GM12878 (cell line): ENCODE measurements at regions of chr10 and their contacts with region 1.

Region 1: GRCh38 chr10:84205049-84205852 is 10.9 kb downstream of the CDHR1 start:
- DNase-seq: peak; percentile 27
- ATAC-seq: peak; percentile 84
- H3K4me3 ChIP-seq: no peak overlapping the region
- H3K27ac ChIP-seq: no peak overlapping the region
- H3K4me1 ChIP-seq: no peaks in the 10 kb centered on the region
- H3K27me3 ChIP-seq: peaks cover 0 to 7% of the 10 kb centered on the region in 2 experiments
- CTCF ChIP-seq: peak; percentile 96 to 99 (median 98); a peak in 5 of 6 replicates
- EP300 ChIP-seq: no peak
- POLR2A ChIP-seq: no peak
- RAD21 ChIP-seq: peak; percentile 94

Region 2: GRCh38 chr10:83886871-83887270 is 318.4 kb before region 1 on chr10:
- CTCF ChIA-PET with region 1: no interaction called
- POLR2A ChIA-PET with region 1: no interaction called
- RAD21 ChIA-PET with region 1: no interaction called
- SMC1A ChIA-PET with region 1: no interaction called
- in situ Hi-C with region 1: no loop called
- intact Hi-C with region 1: loop called (anchors 5 kb)
- DNase-seq: no peak
- ATAC-seq: no peak
- H3K4me3 ChIP-seq: no peak overlapping the region
- H3K27ac ChIP-seq: no peak overlapping the region
- H3K4me1 ChIP-seq: no peaks in the 10 kb centered on the region
- H3K27me3 ChIP-seq: no peaks in the 10 kb centered on the region
- CTCF ChIP-seq: no peak
- EP300 ChIP-seq: no peak
- POLR2A ChIP-seq: no peak
- RAD21 ChIP-seq: no peak

Region 3: DNA sequence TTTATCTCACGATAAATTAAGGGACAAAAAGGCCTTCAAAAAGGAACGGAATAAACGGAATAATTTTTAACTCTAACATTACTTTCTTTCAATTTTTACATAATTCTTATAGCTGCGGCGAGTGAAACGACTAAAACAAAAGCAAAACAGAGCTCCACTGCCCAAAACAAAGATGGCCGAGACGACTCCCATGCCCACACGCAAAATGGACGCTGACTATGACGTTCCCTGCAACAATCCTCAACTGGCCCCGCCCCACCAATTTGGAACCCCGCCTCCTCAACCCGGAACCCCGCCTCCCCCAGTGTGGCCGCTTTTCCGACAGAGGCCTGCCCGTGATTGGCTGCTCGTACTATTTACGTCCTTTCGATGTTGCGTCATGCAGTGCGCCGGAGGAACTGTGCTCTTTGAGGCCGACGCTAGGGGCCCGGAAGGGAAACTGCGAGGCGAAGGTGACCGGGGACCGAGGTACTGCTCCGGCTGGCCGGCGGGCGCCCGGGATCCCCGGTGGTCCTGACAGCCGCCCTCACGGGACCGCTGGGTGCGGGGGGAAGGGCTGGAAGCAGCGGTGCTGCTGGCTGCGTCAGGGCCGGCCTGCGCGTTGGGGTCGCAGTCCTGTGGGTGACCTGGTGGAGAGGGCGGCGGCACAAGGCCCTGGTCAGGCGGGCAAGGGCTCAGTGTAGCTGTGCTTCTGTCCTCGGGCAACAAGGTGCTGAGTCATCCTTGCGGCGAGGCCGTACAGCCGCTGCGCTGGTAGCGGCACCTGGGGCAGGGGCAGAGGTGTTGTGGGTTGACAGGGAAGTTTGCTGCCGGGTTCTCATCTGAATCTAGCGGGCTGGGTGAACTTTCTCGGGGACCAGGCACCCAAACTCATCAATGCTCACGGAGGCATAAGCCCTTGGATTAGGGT is 65.9 kb before region 1 on chr10 and contains the start of gene GHITM:
- CTCF ChIA-PET with region 1: interaction called, 39 read pairs
- POLR2A ChIA-PET with region 1: no interaction called
- RAD21 ChIA-PET with region 1: interaction called, 8 read pairs
- SMC1A ChIA-PET with region 1: interaction called, 5 read pairs
- in situ Hi-C with region 1: loop called (anchors 10 kb)
- intact Hi-C with region 1: no loop called
- DNase-seq: peak; percentile 92
- ATAC-seq: peak; percentile 98
- H3K4me3 ChIP-seq: peak within 1 kb of the TSS; percentile 84
- H3K27ac ChIP-seq: peak within 1 kb of the TSS; percentile 88
- H3K4me1 ChIP-seq: no peaks in the 10 kb centered on the region
- H3K27me3 ChIP-seq: no peaks in the 10 kb centered on the region
- CTCF ChIP-seq: peak; percentile 21 to 39 (median 29); a peak in 4 of 6 replicates
- EP300 ChIP-seq: peak; percentile 19 to 34; a peak in 1 of 4 replicates
- POLR2A ChIP-seq: peak; percentile 93
- RAD21 ChIP-seq: no peak
- polyA plus RNA-seq, gene GHITM: 366 to 501 TPM

Region 4: DNA sequence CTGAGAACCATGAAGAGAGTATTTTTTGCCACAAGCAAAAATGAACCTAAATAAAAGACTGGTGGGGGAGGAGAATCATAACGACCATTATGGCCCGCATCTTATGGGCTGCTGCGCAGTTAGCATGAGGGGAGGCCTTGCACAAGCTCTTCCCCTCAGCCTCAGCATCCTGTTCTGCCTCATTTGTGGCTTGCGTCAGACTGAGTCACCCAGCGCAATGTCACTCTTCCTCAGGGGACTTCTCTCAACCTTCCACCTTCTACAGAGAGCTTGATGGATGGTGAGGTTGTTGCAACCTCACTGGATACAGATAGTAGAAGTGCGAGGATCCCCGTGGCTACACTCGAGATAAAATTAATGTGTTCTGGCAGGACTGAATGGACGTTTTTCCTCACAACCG is 48.5 kb before region 1 on chr10:
- CTCF ChIA-PET with region 1: interaction called, 788 read pairs
- POLR2A ChIA-PET with region 1: no interaction called
- RAD21 ChIA-PET with region 1: interaction called, 8 read pairs
- SMC1A ChIA-PET with region 1: interaction called, 10 read pairs
- in situ Hi-C with region 1: no loop called
- intact Hi-C with region 1: loop called (anchors 2 kb)
- DNase-seq: no peak
- ATAC-seq: peak; percentile 46
- H3K4me3 ChIP-seq: no peak overlapping the region
- H3K27ac ChIP-seq: no peak overlapping the region
- H3K4me1 ChIP-seq: peaks cover 7% of the 10 kb centered on the region
- H3K27me3 ChIP-seq: no peaks in the 10 kb centered on the region
- CTCF ChIP-seq: no peak
- EP300 ChIP-seq: no peak
- POLR2A ChIP-seq: peak; percentile 66
- RAD21 ChIP-seq: no peak

Region 5: DNA sequence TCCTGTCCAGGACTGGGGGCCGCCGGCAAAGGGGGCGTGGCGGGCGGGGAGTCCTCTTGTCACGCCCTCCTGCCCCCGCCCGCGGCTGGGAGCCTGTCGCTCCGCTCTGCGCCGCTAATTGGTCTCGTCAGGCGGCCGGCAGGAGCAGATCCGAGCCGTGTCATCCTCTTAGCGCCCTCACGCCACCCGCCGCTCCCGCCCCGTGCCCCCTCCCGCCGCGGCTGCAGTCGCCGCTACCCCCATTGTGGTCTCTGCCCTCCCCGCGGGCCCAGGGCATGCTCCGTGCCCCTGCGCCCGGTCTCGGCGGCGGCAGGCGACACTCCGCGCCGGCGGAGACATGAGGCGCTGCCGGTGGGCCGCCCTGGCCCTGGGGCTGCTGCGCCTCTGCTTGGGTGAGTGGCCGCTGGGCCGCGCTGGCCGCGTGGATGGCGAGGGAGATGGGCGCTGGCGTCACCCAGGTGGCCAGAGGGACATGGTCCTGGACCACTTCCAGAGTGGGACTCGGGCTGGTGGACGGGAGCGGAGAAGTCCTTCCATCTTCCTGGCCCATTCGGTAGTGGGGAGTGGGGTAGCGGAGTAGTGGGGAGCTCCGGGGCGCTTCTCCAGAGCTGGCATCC is 10.7 kb before region 1 on chr10 and contains the start of gene CDHR1:
- CTCF ChIA-PET with region 1: interaction called, 10 read pairs
- POLR2A ChIA-PET with region 1: no interaction called
- RAD21 ChIA-PET with region 1: interaction called, 4 read pairs
- SMC1A ChIA-PET with region 1: interaction called, 4 read pairs
- in situ Hi-C with region 1: no loop called
- intact Hi-C with region 1: no loop called
- DNase-seq: no peak
- ATAC-seq: peak; percentile 85
- H3K4me3 ChIP-seq: peak within 1 kb of the TSS; percentile 51
- H3K27ac ChIP-seq: no peak within 1 kb of the TSS
- H3K4me1 ChIP-seq: peaks cover 3% of the 10 kb centered on the region
- H3K27me3 ChIP-seq: peaks cover 18 to 29% of the 10 kb centered on the region in 2 experiments
- CTCF ChIP-seq: no peak
- EP300 ChIP-seq: no peak
- POLR2A ChIP-seq: no peak
- RAD21 ChIP-seq: no peak
- polyA plus RNA-seq, gene CDHR1: 0.20 to 0.24 TPM

Region 6: DNA sequence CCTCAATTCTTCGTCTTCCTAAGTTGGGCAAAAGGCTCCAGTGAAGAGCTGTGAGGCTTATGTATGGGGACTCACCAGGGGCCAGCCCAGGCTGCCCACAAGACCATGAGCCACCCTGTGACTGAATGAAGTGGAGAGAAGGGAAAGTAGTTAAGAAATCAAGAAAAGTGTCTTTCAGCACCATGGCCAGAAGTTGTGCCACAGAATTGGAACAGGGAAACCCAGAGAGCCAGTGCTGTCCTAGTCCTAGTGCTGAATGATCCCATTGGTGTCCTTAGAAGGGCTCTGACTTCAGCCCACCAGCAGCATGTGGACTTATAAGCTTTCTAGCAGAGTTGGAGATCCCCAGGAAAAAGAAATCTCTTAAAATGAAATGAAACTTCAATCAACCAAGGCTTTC is 86.1 kb after region 1 on chr10:
- CTCF ChIA-PET with region 1: no interaction called
- POLR2A ChIA-PET with region 1: no interaction called
- RAD21 ChIA-PET with region 1: no interaction called
- SMC1A ChIA-PET with region 1: no interaction called
- in situ Hi-C with region 1: no loop called
- intact Hi-C with region 1: no loop called
- DNase-seq: no peak
- ATAC-seq: peak; percentile 44
- H3K4me3 ChIP-seq: no peak overlapping the region
- H3K27ac ChIP-seq: no peak overlapping the region
- H3K4me1 ChIP-seq: peaks cover 19% of the 10 kb centered on the region
- H3K27me3 ChIP-seq: no peaks in the 10 kb centered on the region; a peak in 1 of 4 replicates
- CTCF ChIP-seq: no peak
- EP300 ChIP-seq: no peak
- POLR2A ChIP-seq: no peak
- RAD21 ChIP-seq: no peak

Region 7: GRCh38 chr10:84328418-84329195 is 123.4 kb after region 1 on chr10 and contains the start of gene CCSER2:
- CTCF ChIA-PET with region 1: no interaction called
- POLR2A ChIA-PET with region 1: no interaction called
- RAD21 ChIA-PET with region 1: no interaction called
- SMC1A ChIA-PET with region 1: no interaction called
- in situ Hi-C with region 1: no loop called
- intact Hi-C with region 1: no loop called
- DNase-seq: no peak
- ATAC-seq: peak; percentile 74
- H3K4me3 ChIP-seq: peak within 1 kb of the TSS; percentile 75
- H3K27ac ChIP-seq: peak within 1 kb of the TSS; percentile 69
- H3K4me1 ChIP-seq: peaks cover 14% of the 10 kb centered on the region
- H3K27me3 ChIP-seq: no peaks in the 10 kb centered on the region; a peak in 1 of 4 replicates
- CTCF ChIP-seq: no peak
- EP300 ChIP-seq: no peak
- POLR2A ChIP-seq: peak; percentile 87
- RAD21 ChIP-seq: no peak
- polyA plus RNA-seq, gene CCSER2: 4.7 to 6.8 TPM